Activated T-helper 2 cell treated with anti-CD3 and anti-CD28 coated beads, Interferon-gamma antibody, Interleukin-2, Interleukin-4, amounts not matched to agents 10 μg/mL and 5 μg/mL and 100 μg/mL, durations not matched to agents 14 hours and 24 hours and 36 hours (primary cell): ENCODE measurements at regions of chr9 and their contacts with region 1.

Region 1: GRCh38 chr9:113410207-113410864 is at the starts of genes C9orf43 and POLE3:
- DNase-seq: peak; percentile 94
- H3K4me3 Mint-ChIP-seq: peak within 1 kb of the TSS; percentile 97
- H3K27ac Mint-ChIP-seq: peak within 1 kb of the TSS; percentile 99
- H3K4me1 Mint-ChIP-seq: peaks cover 20% of the 10 kb centered on the region
- H3K27me3 Mint-ChIP-seq: no peaks in the 10 kb centered on the region
- total RNA-seq, gene C9orf43: 0.48 TPM in 2 replicates
- total RNA-seq, gene POLE3: 71.0 and 73.8 TPM in 2 replicates

Region 2: GRCh38 chr9:113150670-113151611 is 259.4 kb before region 1 on chr9 and contains the start of gene SLC31A2:
- intact Hi-C with region 1: loop called (anchors 5 kb)
- DNase-seq: peak; percentile 82
- H3K4me3 Mint-ChIP-seq: peak within 1 kb of the TSS; percentile 79
- H3K27ac Mint-ChIP-seq: peak within 1 kb of the TSS; percentile 42
- H3K4me1 Mint-ChIP-seq: peaks cover 31% of the 10 kb centered on the region
- H3K27me3 Mint-ChIP-seq: peaks cover 11% of the 10 kb centered on the region
- total RNA-seq, gene SLC31A2: 4.7 and 5.0 TPM in 2 replicates

Region 3: GRCh38 chr9:113309204-113309813 is 101.0 kb before region 1 on chr9:
- intact Hi-C with region 1: loop called (anchors 1 kb)
- DNase-seq: no peak
- H3K4me3 Mint-ChIP-seq: no peak overlapping the region
- H3K27ac Mint-ChIP-seq: no peak overlapping the region
- H3K4me1 Mint-ChIP-seq: peaks cover 12% of the 10 kb centered on the region
- H3K27me3 Mint-ChIP-seq: peaks cover 3% of the 10 kb centered on the region

Region 4: GRCh38 chr9:113349445-113350094 is 60.8 kb before region 1 on chr9 and contains the start of gene BSPRY:
- intact Hi-C with region 1: loop called (anchors 1 kb)
- DNase-seq: peak; percentile 43
- H3K4me3 Mint-ChIP-seq: peak within 1 kb of the TSS; percentile 88
- H3K27ac Mint-ChIP-seq: peak within 1 kb of the TSS; percentile 97
- H3K4me1 Mint-ChIP-seq: peaks cover 44% of the 10 kb centered on the region
- H3K27me3 Mint-ChIP-seq: no peaks in the 10 kb centered on the region
- total RNA-seq, gene BSPRY: 11.1 and 12.5 TPM in 2 replicates

Region 5: DNA sequence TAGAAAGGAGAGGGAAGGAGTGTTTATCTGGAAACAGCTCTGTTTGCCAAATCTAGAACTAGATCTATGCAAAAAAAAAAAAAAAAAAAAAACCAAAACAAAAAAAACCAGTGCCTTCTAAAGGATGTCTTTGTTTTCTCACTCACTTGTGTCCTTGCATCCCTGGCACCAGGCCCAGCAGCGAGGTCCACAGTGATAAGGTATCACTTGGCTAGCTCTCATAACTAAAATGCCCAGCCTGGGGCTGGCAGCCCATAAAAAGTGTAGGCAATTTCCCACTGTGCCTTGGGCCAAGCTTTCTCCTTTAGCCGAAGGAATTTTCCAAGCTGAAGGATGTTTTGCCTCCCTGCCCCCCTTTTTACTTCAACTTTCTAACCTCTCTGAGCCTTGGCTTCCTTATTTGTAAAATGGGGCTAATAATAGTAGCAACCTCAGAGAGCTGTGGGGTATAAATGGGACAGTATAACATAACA is 74.0 kb after region 1 on chr9:
- intact Hi-C with region 1: no loop called
- DNase-seq: no peak
- H3K4me3 Mint-ChIP-seq: no peak overlapping the region
- H3K27ac Mint-ChIP-seq: no peak overlapping the region
- H3K4me1 Mint-ChIP-seq: peaks cover 5% of the 10 kb centered on the region
- H3K27me3 Mint-ChIP-seq: peaks cover 2% of the 10 kb centered on the region

Region 6: DNA sequence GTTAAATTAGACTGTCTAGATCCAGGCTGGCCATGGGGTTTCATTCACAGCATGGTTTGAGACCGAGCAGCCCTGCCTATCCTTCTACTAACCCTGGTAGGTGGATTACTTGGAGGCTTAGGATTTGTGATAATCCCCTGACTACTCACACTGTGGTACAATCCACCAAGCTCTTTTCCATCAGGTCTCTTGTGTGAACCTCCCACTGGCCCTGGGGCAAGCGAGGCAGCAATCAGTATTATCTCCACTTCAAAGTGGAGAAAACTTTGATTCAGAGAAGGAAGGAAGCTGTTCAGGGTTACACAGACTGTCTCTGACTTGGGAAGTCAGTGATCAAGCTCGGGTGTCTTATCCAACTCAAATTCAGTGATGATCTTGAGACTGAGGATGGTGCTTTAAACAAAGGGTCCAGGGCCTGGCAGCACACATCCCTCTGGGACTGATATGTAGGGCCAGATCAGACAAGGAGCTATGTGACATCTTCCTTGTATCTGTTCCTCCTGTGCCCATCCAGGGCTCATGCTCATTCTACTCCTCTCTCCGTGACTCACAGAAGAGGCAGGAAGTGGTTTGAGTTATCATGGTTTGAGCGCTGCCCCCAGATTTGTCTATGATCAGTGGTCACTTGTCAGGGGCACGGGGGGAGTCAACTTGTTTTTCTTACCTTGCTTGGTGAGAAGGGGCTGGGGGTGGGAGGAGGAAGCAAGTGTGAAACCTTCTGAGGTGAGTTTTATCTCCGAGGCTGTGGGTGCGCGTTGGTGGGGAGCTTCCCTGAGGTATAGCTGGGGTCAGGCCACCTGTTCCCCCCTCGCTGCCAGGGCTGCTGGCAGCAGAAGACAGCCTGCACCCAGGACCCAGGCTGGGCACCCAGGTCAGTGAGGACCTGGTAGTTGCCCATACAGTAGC is 101.8 kb after region 1 on chr9:
- intact Hi-C with region 1: loop called (anchors 1 kb)
- DNase-seq: peak; percentile 66
- H3K4me3 Mint-ChIP-seq: peak overlapping the region; percentile 54
- H3K27ac Mint-ChIP-seq: peak overlapping the region; percentile 96
- H3K4me1 Mint-ChIP-seq: peaks cover 56% of the 10 kb centered on the region
- H3K27me3 Mint-ChIP-seq: peaks cover 4% of the 10 kb centered on the region